CD4-positive, alpha-beta T cell (primary cell): ENCODE measurements at regions of chr2 and their contacts with region 1.

Region 1: DNA sequence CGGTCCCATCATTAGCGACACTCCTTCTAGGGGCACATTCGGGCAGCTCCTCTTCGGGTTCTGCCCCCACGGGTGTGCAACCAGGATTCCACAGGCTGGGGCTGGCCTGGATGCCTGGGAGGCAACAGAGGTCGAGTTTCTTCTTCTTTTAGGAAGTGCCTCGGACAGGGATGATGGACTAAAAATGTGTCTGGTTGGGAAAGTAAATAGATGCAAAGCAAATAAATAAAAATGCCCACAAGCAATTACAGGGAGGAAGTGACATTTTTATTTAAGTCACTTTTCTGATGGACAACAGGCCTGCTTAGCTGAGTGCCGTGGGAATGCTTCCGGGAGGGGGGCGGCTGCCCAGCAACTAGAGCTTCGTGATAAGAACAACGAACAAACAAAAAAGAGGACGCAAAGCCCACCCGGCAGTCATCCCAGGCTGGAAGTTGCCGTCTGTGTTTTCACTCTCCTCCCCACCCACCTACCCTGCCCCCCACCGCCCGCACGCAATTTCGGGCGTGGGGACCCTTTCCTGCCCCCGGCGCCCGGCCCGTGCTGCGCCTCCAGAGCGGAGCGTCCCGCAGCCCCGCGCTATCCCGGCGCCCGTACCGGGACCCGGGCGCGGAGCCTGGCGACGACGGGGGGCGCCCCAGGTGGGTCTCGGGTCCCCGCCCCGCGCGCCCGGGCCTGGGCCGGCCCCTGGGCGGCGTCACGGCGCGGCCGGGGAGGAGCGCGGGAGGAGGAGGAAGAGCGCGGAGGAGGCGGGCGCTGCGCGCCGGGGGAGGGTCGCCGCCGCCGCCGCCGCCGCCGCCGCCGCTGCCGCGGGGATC is 412 bp upstream of the NCK2 start:
- DNase-seq: peak; percentile 48 to 89 (median 68)
- ATAC-seq: peak; percentile 71
- H3K4me3 ChIP-seq: peak overlapping the region; percentile 58
- H3K4me3 Mint-ChIP-seq: peak overlapping the region; percentile 90
- H3K27ac ChIP-seq: peak overlapping the region; percentile 41 to 68
- H3K27ac Mint-ChIP-seq: peak overlapping the region; percentile 96
- H3K4me1 ChIP-seq: peaks cover 72% of the 10 kb centered on the region
- H3K4me1 Mint-ChIP-seq: peaks cover 87% of the 10 kb centered on the region
- H3K27me3 ChIP-seq: no peaks in the 10 kb centered on the region
- H3K27me3 Mint-ChIP-seq: no peaks in the 10 kb centered on the region
- CTCF ChIP-seq: no peak

Region 2: GRCh38 chr2:105337124-105338019 is 406.9 kb before region 1 on chr2 and contains the start of gene C2orf49:
- CTCF ChIA-PET with region 1: no interaction called
- POLR2A ChIA-PET with region 1: no interaction called
- intact Hi-C with region 1: loop called in 1 of 2 experiments (anchors 10 kb)
- DNase-seq: peak; percentile 79 to 95 (median 85)
- ATAC-seq: peak; percentile 89
- H3K4me3 ChIP-seq: peak within 1 kb of the TSS; percentile 71
- H3K4me3 Mint-ChIP-seq: peak within 1 kb of the TSS; percentile 99
- H3K27ac ChIP-seq: peak within 1 kb of the TSS; percentile 82 to 97
- H3K27ac Mint-ChIP-seq: peak within 1 kb of the TSS; percentile 100
- H3K4me1 ChIP-seq: peaks cover 19% of the 10 kb centered on the region
- H3K4me1 Mint-ChIP-seq: peaks cover 50% of the 10 kb centered on the region
- H3K27me3 ChIP-seq: no peaks in the 10 kb centered on the region
- H3K27me3 Mint-ChIP-seq: no peaks in the 10 kb centered on the region
- CTCF ChIP-seq: no peak
- total RNA-seq, gene C2orf49: 28.8 to 29.4 TPM

Region 3: GRCh38 chr2:105775809-105776559 is 31.7 kb after region 1 on chr2:
- CTCF ChIA-PET with region 1: interaction called, 5 read pairs
- POLR2A ChIA-PET with region 1: interaction called, 33 read pairs
- intact Hi-C with region 1: no loop called
- DNase-seq: peak in 5 of 14 experiments; percentile 28 to 86 (median 68)
- ATAC-seq: peak; percentile 62
- H3K4me3 ChIP-seq: peak overlapping the region; percentile 41
- H3K4me3 Mint-ChIP-seq: peak overlapping the region; percentile 79
- H3K27ac ChIP-seq: peak overlapping the region; percentile 69 to 92
- H3K27ac Mint-ChIP-seq: peak overlapping the region; percentile 98
- H3K4me1 ChIP-seq: peaks cover 92% of the 10 kb centered on the region
- H3K4me1 Mint-ChIP-seq: peaks cover 94% of the 10 kb centered on the region
- H3K27me3 ChIP-seq: no peaks in the 10 kb centered on the region
- H3K27me3 Mint-ChIP-seq: no peaks in the 10 kb centered on the region
- CTCF ChIP-seq: no peak

Region 4: GRCh38 chr2:105797298-105797819 is 53.1 kb after region 1 on chr2:
- CTCF ChIA-PET with region 1: interaction called, 5 read pairs
- POLR2A ChIA-PET with region 1: interaction called, 58 read pairs
- intact Hi-C with region 1: loop called in 1 of 2 experiments (anchors 2 kb)
- DNase-seq: peak in 4 of 14 experiments; percentile 51 to 84 (median 68)
- ATAC-seq: peak; percentile 24
- H3K4me3 ChIP-seq: peak overlapping the region; percentile 13
- H3K4me3 Mint-ChIP-seq: peak overlapping the region; percentile 77
- H3K27ac ChIP-seq: peak overlapping the region; percentile 52 to 81
- H3K27ac Mint-ChIP-seq: peak overlapping the region; percentile 98
- H3K4me1 ChIP-seq: peaks cover 88% of the 10 kb centered on the region
- H3K4me1 Mint-ChIP-seq: peaks cover 92% of the 10 kb centered on the region
- H3K27me3 ChIP-seq: no peaks in the 10 kb centered on the region
- H3K27me3 Mint-ChIP-seq: no peaks in the 10 kb centered on the region
- CTCF ChIP-seq: no peak

Region 5: DNA sequence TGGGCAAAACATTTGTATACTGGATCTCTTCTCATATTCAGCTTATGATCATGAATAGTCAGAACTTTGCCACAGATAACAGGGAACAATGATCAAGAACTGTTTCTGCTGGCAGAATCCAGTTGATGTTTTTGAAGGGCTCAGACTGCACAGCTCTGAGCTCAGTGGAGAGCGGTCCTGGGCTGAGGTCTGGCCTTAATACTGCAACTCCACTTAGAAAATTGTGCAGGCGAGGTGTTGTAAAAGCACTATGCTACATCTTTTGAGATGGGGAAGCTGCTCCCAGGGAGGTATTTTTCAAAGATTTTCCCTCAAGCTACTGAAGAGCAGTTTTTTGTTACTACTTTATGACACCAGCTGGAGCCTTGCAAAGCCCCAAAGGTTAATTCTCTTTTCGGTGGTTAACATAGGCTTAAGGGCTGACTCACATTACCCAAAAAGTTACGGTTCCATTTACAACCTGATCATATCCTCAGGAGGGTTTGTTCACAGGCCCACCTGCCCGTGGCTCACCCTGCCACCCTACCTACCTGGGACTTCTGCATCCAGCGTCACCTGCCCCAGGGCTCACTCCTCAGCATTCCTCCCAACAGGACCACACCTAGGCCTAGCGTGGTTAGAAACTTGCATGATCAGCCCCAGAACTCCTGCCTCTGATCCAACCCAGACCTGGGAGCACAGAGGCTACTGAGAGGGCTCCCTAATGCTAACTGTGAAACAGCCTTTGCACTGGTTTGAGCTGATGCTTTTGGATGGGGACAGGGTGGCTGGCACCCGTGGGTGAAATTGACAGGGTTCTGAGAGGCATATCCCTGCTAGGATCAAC is 114.8 kb after region 1 on chr2:
- CTCF ChIA-PET with region 1: no interaction called
- POLR2A ChIA-PET with region 1: interaction called, 3 read pairs
- intact Hi-C with region 1: loop called (anchors 5 kb)
- DNase-seq: peak in 1 of 14 experiments; percentile 60
- ATAC-seq: peak; percentile 25
- H3K4me3 ChIP-seq: no peak overlapping the region
- H3K4me3 Mint-ChIP-seq: peak overlapping the region; percentile 27
- H3K27ac ChIP-seq: peak overlapping the region; percentile 26 to 90
- H3K27ac Mint-ChIP-seq: peak overlapping the region; percentile 97
- H3K4me1 ChIP-seq: peaks cover 89% of the 10 kb centered on the region
- H3K4me1 Mint-ChIP-seq: peaks cover 95% of the 10 kb centered on the region
- H3K27me3 ChIP-seq: no peaks in the 10 kb centered on the region
- H3K27me3 Mint-ChIP-seq: no peaks in the 10 kb centered on the region
- CTCF ChIP-seq: no peak

Region 6: GRCh38 chr2:106085181-106085940 is 341.1 kb after region 1 on chr2:
- CTCF ChIA-PET with region 1: no interaction called
- POLR2A ChIA-PET with region 1: interaction called, 4 read pairs
- intact Hi-C with region 1: loop called (anchors 5 kb)
- DNase-seq: peak in 13 of 14 experiments; percentile 40 to 86 (median 60)
- ATAC-seq: peak; percentile 90
- H3K4me3 ChIP-seq: peak overlapping the region; percentile 9
- H3K4me3 Mint-ChIP-seq: peak overlapping the region; percentile 50
- H3K27ac ChIP-seq: peak overlapping the region; percentile 56 to 59
- H3K27ac Mint-ChIP-seq: peak overlapping the region; percentile 95
- H3K4me1 ChIP-seq: peaks cover 35% of the 10 kb centered on the region
- H3K4me1 Mint-ChIP-seq: peaks cover 73% of the 10 kb centered on the region
- H3K27me3 ChIP-seq: no peaks in the 10 kb centered on the region
- H3K27me3 Mint-ChIP-seq: no peaks in the 10 kb centered on the region
- CTCF ChIP-seq: peak; percentile 61